ENCODE measurements at regions of chr1 and their contacts with region 1.

Region 1: DNA sequence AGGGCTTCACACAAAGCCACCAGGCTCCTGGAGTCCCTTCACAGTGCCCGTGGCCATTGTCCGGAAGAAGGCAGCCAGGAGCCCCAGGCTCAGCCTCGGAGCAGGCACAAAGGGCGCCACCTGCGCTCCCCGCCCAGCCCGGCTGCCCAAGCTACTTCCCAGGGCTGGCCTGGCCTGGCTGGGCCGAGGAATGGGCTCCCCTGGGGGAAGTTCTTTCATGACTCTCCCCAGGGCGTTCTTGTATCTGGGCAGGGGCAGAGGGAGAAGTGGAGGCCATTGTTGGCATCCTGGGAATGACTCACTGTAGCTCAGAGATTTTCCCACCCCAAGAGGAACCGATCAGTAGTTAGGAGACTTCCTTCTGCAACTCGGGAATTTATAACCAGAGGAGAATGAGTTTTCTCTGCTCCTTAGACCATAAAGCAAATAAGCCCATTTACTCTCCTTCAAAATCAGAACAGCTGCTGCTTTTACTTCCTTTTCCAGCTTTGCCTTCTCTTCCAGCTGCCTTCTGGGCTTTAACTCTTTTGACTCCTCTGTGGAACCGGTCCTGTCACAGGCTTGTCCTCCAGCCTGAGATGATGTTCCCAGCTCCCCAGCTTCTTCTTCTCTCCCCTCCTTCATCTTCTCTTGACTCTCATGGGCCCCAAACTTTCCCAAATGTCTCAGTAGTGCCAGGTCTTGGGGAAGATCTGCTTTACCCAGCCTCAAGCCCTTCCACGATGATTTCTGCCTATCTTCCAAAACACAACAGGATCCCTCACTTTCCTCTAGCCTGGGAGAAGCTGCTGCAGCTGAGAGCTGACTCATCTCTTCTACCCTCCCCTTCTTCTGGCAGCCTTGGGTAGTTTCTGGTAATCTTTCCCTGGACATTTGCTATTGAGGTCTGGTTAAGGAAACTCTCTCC is 118.7 kb upstream of the CD34 start:
- DNase-seq: no peak
- ATAC-seq: no peak
- H3K4me3 ChIP-seq: no peak overlapping the region
- H3K27ac ChIP-seq: peak overlapping the region in 2 of 4 donors; percentile 35 to 40
- H3K4me1 ChIP-seq: peaks cover 6% of the 10 kb centered on the region
- H3K27me3 ChIP-seq: no peaks in the 10 kb centered on the region
- CTCF ChIP-seq: no peak
- POLR2A ChIP-seq: no peak

Region 2: DNA sequence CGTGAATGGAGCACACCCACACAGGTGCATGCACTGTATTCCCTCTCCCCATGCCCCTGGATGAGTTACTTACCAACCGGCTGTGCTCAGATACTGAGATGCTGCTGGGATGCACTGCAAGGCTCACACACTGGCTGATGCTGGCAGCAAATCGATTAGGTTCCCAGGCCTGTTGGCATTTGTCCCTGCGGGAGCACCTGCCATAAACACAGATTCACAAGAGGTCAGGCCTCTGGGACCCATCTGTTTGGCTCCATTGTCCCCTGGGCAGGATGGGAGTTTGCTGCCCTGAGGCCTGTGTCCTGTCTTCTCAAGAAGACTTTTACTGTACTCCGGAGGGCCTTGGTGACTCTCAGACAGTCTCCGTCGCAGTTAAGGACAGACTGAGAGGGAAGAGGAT is 69.1 kb after region 1 on chr1:
- intact Hi-C with region 1: loop called (anchors 5 kb)
- DNase-seq: no peak
- ATAC-seq: no peak
- H3K4me3 ChIP-seq: no peak overlapping the region
- H3K27ac ChIP-seq: no peak overlapping the region
- H3K4me1 ChIP-seq: peaks cover 8% of the 10 kb centered on the region
- H3K27me3 ChIP-seq: no peaks in the 10 kb centered on the region
- CTCF ChIP-seq: no peak
- POLR2A ChIP-seq: no peak

Measured in body of pancreas (tissue), 4 donors.